Transverse colon (tissue), 4 donors: ENCODE measurements at regions of chrX and their contacts with region 1.

Region 1: DNA sequence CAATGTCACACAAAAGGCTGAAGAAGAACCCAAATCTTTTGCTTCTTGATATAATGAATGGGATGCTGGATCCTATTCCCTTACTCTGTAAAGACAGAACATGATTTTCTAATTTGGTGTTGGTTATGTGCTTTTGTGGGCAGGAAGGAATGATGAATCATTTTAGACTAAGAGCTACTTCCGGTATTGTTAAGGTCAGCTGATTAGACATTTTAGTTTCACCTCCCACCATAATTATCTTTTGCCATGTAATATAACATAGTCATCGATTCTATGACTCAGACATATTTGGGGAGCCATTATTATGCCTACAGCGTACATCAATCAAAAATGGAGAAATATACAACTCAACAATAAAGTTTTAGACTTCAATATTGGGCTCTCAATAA is 265.3 kb downstream of the ZNF674 start:
- DNase-seq: no peak
- H3K4me3 ChIP-seq: no peak overlapping the region
- H3K27ac ChIP-seq: no peak overlapping the region
- H3K4me1 ChIP-seq: no peaks in the 10 kb centered on the region
- H3K27me3 ChIP-seq: no peaks in the 10 kb centered on the region
- CTCF ChIP-seq: no peak
- EP300 ChIP-seq: no peak
- POLR2A ChIP-seq: no peak

Region 2: DNA sequence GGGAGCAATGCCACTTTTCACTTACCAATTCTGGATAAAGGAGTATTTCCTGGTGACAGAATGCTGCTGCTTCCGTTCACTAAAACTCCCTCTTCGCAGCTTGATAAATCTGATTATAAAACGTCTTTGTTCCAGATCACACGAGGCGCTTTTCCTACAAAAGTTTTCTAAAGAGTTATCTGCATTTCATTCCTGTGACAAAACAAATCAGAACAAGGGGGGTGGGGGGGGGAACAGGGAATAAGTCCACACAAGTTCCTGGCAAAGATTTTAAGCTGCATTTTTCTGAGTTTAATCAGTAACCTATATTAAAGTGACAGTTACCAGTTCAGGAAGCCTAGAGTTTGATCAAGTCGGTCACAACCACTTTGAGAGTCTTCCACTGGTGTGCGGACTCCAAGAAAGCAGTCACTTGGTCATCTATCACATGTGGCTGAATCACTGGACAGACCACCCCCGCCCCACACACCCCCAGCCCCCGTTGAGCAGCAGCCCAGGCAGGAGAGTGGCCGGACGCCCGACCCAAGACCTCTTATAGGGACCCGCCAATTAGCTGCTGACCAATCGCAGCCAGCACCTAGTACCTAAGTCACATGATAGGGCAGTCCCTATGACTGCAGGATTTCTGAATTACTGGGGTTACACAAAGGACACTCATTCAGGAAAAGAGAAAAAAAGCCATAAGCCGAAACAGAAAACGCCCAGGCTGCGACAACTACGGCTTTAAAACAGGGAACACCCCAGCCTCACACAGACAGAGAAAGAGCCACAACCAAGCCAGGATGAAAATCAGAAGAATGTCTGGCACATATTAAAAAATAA is 509.9 kb before region 1 on chrX:
- in situ Hi-C with region 1: no loop called
- intact Hi-C with region 1: no loop called
- DNase-seq: peak; percentile 71
- H3K4me3 ChIP-seq: peak overlapping the region; percentile 5 to 55 (median 30)
- H3K27ac ChIP-seq: peak overlapping the region; percentile 79 to 88 (median 86)
- H3K4me1 ChIP-seq: peaks cover 0 to 15% (median 0%) of the 10 kb centered on the region in 4 donors
- H3K27me3 ChIP-seq: no peaks in the 10 kb centered on the region
- CTCF ChIP-seq: no peak
- EP300 ChIP-seq: no peak
- POLR2A ChIP-seq: peak; percentile 78

Region 3: DNA sequence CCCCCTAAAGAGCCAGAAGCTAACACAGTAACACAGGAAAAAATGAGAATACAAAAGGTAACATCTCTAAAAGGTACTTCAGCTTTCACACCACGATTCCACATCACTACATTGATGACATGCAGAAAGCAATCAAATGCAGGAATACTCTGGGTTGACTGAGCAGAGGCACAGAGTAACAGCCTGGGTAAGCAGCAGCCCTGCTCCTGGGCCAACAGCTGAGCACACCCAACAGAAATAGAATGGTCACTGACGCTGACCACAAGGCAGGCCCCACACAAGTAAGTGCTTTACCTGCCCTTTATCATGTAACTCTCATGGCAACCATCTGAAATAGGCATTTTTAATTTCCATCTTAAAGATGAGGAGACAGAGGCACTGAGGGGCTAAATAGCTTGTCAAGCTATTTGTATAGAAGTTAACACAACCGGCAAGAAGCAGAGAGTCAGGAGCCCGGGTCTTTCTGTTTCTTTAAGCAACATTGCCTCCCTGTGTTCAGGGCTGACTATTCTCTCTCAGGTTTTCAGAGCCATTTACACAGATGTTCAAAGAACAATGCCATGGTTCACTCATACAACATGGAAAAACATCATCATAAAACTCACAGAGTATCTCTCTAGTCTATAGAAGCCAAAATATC is 96.4 kb after region 1 on chrX:
- in situ Hi-C with region 1: loop called in 1 of 4 experiments (anchors 25 kb)
- intact Hi-C with region 1: no loop called
- DNase-seq: peak; percentile 13
- H3K4me3 ChIP-seq: no peak overlapping the region
- H3K27ac ChIP-seq: no peak overlapping the region
- H3K4me1 ChIP-seq: no peaks in the 10 kb centered on the region
- H3K27me3 ChIP-seq: no peaks in the 10 kb centered on the region
- CTCF ChIP-seq: peak in 3 of 5 experiments; percentile 11 to 32 (median 12)
- EP300 ChIP-seq: no peak
- POLR2A ChIP-seq: no peak